ENCODE measurements at regions of chr7 and their contacts with region 1.

Region 1: GRCh38 chr7:123367484-123368122 is 166.8 kb downstream of the IQUB start:
- DNase-seq: peak; percentile 15
- ATAC-seq: peak; percentile 88
- H3K4me3 ChIP-seq: no peak overlapping the region
- H3K27ac ChIP-seq: no peak overlapping the region
- H3K4me1 ChIP-seq: no peaks in the 10 kb centered on the region
- H3K27me3 ChIP-seq: no peaks in the 10 kb centered on the region
- CTCF ChIP-seq: peak; percentile 74 to 84 (median 77)
- EP300 ChIP-seq: no peak
- POLR2A ChIP-seq: no peak
- RAD21 ChIP-seq: peak; percentile 81

Region 2: GRCh38 chr7:122689346-122690109 is 678.1 kb before region 1 on chr7:
- CTCF ChIA-PET with region 1: no interaction called
- POLR2A ChIA-PET with region 1: no interaction called
- RAD21 ChIA-PET with region 1: interaction called, 3 read pairs
- SMC1A ChIA-PET with region 1: interaction called, 5 read pairs
- in situ Hi-C with region 1: no loop called
- intact Hi-C with region 1: loop called (anchors 10 kb)
- DNase-seq: no peak
- ATAC-seq: peak; percentile 55
- H3K4me3 ChIP-seq: no peak overlapping the region
- H3K27ac ChIP-seq: no peak overlapping the region
- H3K4me1 ChIP-seq: no peaks in the 10 kb centered on the region
- H3K27me3 ChIP-seq: no peaks in the 10 kb centered on the region
- CTCF ChIP-seq: peak in 1 of 3 experiments; percentile 1; a peak in 1 of 6 replicates
- EP300 ChIP-seq: no peak
- POLR2A ChIP-seq: no peak
- RAD21 ChIP-seq: no peak

Region 3: DNA sequence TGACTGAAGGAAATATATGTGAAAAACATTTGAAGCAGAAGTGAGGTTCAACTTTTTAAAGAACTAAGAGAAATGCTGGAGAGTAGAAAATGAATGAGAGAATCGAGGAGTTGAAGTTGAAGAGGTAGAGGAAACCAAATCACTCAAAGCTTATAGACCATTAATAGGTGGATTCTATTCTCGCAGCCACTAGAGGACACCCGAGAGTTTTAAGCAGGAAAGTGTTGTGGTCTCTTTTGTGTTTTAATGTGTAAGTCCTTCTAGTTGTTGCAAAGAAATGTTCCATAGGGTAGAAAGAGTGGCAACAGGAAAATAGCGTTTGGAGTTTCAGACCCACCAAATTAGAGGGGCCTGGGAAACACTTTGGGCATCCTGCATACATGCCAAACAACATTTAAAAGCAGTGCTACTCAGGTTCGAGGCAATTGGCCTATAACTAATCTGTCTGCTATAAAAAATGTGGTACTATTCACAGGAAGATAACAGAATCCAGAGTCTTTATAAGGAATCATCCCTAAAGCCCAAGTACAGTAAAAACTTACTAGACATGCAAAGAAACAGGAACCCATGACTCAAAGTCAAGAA is 296.8 kb before region 1 on chr7:
- CTCF ChIA-PET with region 1: interaction called, 40 read pairs
- POLR2A ChIA-PET with region 1: no interaction called
- RAD21 ChIA-PET with region 1: interaction called, 17 read pairs
- SMC1A ChIA-PET with region 1: interaction called, 30 read pairs
- in situ Hi-C with region 1: no loop called
- intact Hi-C with region 1: loop called (anchors 1 kb)
- DNase-seq: no peak
- ATAC-seq: peak; percentile 81
- H3K4me3 ChIP-seq: no peak overlapping the region
- H3K27ac ChIP-seq: no peak overlapping the region
- H3K4me1 ChIP-seq: no peaks in the 10 kb centered on the region
- H3K27me3 ChIP-seq: no peaks in the 10 kb centered on the region
- CTCF ChIP-seq: peak; percentile 61 to 74 (median 71)
- EP300 ChIP-seq: no peak
- POLR2A ChIP-seq: no peak
- RAD21 ChIP-seq: peak; percentile 80

Region 4: GRCh38 chr7:123170333-123171246 is 197.0 kb before region 1 on chr7:
- CTCF ChIA-PET with region 1: interaction called, 11 read pairs
- POLR2A ChIA-PET with region 1: no interaction called
- RAD21 ChIA-PET with region 1: interaction called, 4 read pairs
- SMC1A ChIA-PET with region 1: interaction called, 3 read pairs
- in situ Hi-C with region 1: no loop called
- intact Hi-C with region 1: no loop called
- DNase-seq: no peak
- ATAC-seq: no peak
- H3K4me3 ChIP-seq: no peak overlapping the region
- H3K27ac ChIP-seq: no peak overlapping the region
- H3K4me1 ChIP-seq: no peaks in the 10 kb centered on the region
- H3K27me3 ChIP-seq: no peaks in the 10 kb centered on the region
- CTCF ChIP-seq: no peak
- EP300 ChIP-seq: no peak
- POLR2A ChIP-seq: no peak
- RAD21 ChIP-seq: no peak